BJ (cell line): ENCODE measurements at regions of chr22 and their contacts with region 1.

Region 1: GRCh38 chr22:28019881-28020871 is 101.1 kb upstream of the PITPNB start:
- DNase-seq: no peak
- H3K4me3 ChIP-seq: no peak overlapping the region
- H3K27me3 ChIP-seq: no peaks in the 10 kb centered on the region
- CTCF ChIP-seq: peak; percentile 98

Region 2: DNA sequence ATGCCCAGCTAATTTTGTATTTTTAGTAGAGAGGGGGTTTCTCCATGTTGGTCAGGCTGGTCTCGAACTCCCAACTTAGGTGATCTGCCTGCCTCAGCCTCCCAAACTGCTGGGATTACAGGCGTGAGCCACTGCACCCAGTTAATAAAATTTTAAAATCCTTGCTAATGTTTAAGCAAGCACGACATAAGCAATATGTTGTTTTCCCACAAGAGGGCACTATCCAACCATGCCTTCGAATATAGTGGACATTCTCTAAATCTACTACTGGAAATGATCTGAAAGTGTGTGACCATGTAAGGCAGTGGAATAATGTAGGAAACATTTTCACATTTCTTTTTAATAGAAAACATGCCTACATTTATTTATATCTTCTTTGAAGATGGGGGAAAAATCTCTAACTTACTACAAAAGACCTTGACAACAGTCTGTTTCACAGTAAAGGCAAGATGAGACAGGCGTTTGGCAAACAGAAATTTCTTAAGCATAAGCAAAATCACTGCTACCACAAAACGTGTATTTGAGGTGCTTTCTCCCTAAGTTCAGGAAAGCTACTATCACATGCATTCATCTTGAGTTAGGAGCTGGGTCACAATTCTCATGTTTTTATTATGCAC is 139.3 kb before region 1 on chr22:
- CTCF ChIA-PET with region 1: interaction called, 11 read pairs
- POLR2A ChIA-PET with region 1: no interaction called
- DNase-seq: peak; percentile 45
- H3K4me3 ChIP-seq: no peak overlapping the region
- H3K27me3 ChIP-seq: no peaks in the 10 kb centered on the region
- CTCF ChIP-seq: peak; percentile 68

Region 3: GRCh38 chr22:28034760-28035401 is 14.7 kb after region 1 on chr22:
- CTCF ChIA-PET with region 1: interaction called, 32 read pairs
- POLR2A ChIA-PET with region 1: no interaction called
- DNase-seq: no peak
- H3K4me3 ChIP-seq: no peak overlapping the region
- H3K27me3 ChIP-seq: no peaks in the 10 kb centered on the region
- CTCF ChIP-seq: no peak

Region 4: DNA sequence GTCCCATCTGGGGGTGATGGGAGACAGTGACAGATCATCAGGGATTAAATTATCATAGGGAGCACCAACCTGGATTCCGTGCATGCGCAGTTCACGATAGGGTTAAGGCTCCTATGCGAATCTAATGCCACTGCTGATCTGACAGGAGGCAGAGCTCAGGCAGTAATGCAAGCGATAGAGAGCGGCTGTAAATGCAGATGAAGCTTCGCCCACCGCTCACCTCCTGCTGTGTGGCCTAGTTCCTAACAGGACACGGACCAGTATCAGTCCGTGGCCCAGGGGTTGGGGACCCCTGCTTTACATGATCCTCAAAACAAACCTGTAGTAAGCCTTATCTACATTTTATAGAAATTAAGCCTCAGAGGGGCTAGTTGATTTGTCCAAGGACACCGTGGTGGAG is 565.1 kb after region 1 on chr22:
- CTCF ChIA-PET with region 1: interaction called, 10 read pairs
- POLR2A ChIA-PET with region 1: no interaction called
- DNase-seq: no peak
- H3K4me3 ChIP-seq: no peak overlapping the region
- H3K27me3 ChIP-seq: no peaks in the 10 kb centered on the region
- CTCF ChIP-seq: no peak

Region 5: GRCh38 chr22:28600546-28601143 is 580.5 kb after region 1 on chr22:
- CTCF ChIA-PET with region 1: interaction called, 18 read pairs
- POLR2A ChIA-PET with region 1: no interaction called
- DNase-seq: no peak
- H3K4me3 ChIP-seq: no peak overlapping the region
- H3K27me3 ChIP-seq: no peaks in the 10 kb centered on the region
- CTCF ChIP-seq: peak; percentile 28; the same call in 1 of the 2 replicates